BJ (cell line): ENCODE measurements at regions of chr11 and their contacts with region 1.

Region 1: DNA sequence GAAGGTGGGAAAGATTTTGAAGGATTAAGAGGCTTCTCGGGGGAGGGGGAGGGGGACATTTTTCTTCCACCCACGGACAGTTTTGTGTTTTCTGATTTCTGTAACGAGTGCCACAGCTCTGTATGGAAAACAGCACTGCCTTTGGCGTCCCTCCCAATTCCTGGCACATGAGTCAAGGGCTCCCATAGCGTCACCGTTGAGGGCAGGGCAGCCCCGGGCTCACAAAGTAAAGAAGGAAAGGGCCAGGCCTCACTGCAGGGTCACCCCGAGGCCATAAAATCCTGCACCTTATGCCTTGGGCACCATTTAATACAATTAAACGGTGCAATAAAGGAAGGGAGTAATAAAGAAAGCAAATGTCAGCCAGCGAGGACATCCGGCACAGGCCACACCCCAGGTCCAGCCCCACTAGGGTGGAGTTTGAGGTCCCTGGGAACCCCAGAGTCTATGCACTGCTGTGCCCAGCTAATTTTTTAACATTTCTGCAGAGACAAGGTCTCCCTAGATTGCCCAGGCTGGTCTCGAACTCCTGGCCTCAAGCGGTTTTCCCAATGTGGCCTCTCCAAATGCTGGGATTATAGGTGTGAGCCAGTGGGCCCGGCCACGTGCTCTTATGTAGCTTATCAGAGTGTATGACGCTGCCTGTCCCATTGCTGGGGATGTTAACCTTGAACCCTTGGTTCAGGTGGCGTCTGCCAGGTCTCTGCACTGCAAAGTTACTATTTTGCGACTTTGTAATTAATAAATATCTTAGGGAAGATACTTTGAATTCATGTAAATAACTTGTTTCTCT is 13.7 kb upstream of the MUC2 start:
- DNase-seq: peak; percentile 65
- H3K4me3 ChIP-seq: no peak overlapping the region
- H3K27me3 ChIP-seq: no peaks in the 10 kb centered on the region
- CTCF ChIP-seq: no peak

Region 2: DNA sequence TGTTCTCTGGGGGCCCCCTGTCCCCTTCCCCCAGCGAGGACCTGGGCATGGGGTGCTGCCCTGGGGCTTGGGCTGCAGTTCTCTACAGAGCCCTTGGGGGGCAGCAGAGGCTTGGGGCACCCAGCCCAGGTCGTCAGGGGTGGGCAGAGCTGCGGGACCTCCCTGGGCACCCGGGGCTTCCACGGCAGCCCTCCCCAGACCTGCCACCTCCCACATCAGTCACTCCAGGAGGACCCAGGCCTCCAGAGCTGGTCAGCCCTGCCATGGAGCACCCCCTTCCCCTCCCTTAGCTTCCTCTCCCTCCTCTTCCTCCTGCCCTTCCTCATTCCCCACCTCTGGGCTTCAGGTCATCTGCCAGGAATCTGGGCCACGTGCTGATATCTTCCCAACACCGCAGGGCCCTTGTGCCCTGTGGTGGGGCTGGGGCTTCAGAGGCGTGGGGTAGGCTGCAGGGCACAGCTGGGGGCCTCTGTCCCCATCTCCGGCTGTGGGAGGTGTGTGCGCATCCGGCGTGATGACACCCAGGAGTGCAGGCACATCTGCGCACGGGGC is 212.6 kb before region 1 on chr11:
- CTCF ChIA-PET with region 1: no interaction called
- POLR2A ChIA-PET with region 1: no interaction called
- DNase-seq: no peak
- H3K4me3 ChIP-seq: no peak overlapping the region
- H3K27me3 ChIP-seq: no peaks in the 10 kb centered on the region
- CTCF ChIP-seq: peak; percentile 92

Region 3: GRCh38 chr11:1050581-1051355 is 10.3 kb before region 1 on chr11:
- CTCF ChIA-PET with region 1: interaction called, 16 read pairs
- POLR2A ChIA-PET with region 1: interaction called, 4 read pairs
- DNase-seq: no peak
- H3K4me3 ChIP-seq: no peak overlapping the region
- H3K27me3 ChIP-seq: peaks cover 5% of the 10 kb centered on the region
- CTCF ChIP-seq: peak; percentile 95

Region 4: GRCh38 chr11:1271002-1271401 is 210.0 kb after region 1 on chr11:
- CTCF ChIA-PET with region 1: no interaction called
- POLR2A ChIA-PET with region 1: no interaction called
- DNase-seq: no peak
- H3K4me3 ChIP-seq: no peak overlapping the region
- H3K27me3 ChIP-seq: no peaks in the 10 kb centered on the region
- CTCF ChIP-seq: no peak